B cell (primary cell): ENCODE measurements at regions of chr3 and their contacts with region 1.

Region 1: GRCh38 chr3:10115326-10116137 is at the start of gene BRK1:
- DNase-seq: peak; percentile 98
- ATAC-seq: peak; percentile 96
- H3K4me3 ChIP-seq: peak within 1 kb of the TSS; percentile 61 to 96 (median 84)
- H3K4me3 Mint-ChIP-seq: peak within 1 kb of the TSS; percentile 94
- H3K27ac ChIP-seq: peak within 1 kb of the TSS; percentile 48 to 85
- H3K27ac Mint-ChIP-seq: peak within 1 kb of the TSS; percentile 97
- H3K4me1 ChIP-seq: peaks cover 16 to 27% of the 10 kb centered on the region in 2 donors
- H3K4me1 Mint-ChIP-seq: peaks cover 34% of the 10 kb centered on the region
- H3K27me3 ChIP-seq: no peaks in the 10 kb centered on the region
- H3K27me3 Mint-ChIP-seq: no peaks in the 10 kb centered on the region
- CTCF ChIP-seq: no peak
- total RNA-seq, gene BRK1: 82.8 and 86.3 TPM in 2 replicates

Region 2: GRCh38 chr3:9843715-9844438 is 271.7 kb before region 1 on chr3 and contains the start of gene RPUSD3:
- CTCF ChIA-PET with region 1: no interaction called
- POLR2A ChIA-PET with region 1: no interaction called
- intact Hi-C with region 1: loop called (anchors 1 kb)
- DNase-seq: peak; percentile 97
- ATAC-seq: peak; percentile 100
- H3K4me3 ChIP-seq: peak within 1 kb of the TSS; percentile 60 to 96 (median 73)
- H3K4me3 Mint-ChIP-seq: peak within 1 kb of the TSS; percentile 98
- H3K27ac ChIP-seq: peak within 1 kb of the TSS; percentile 17 to 75
- H3K27ac Mint-ChIP-seq: peak within 1 kb of the TSS; percentile 92
- H3K4me1 ChIP-seq: peaks cover 8 to 17% of the 10 kb centered on the region in 2 donors
- H3K4me1 Mint-ChIP-seq: peaks cover 20% of the 10 kb centered on the region
- H3K27me3 ChIP-seq: no peaks in the 10 kb centered on the region
- H3K27me3 Mint-ChIP-seq: no peaks in the 10 kb centered on the region
- CTCF ChIP-seq: no peak
- total RNA-seq, gene RPUSD3: 60.7 and 62.1 TPM in 2 replicates

Region 3: DNA sequence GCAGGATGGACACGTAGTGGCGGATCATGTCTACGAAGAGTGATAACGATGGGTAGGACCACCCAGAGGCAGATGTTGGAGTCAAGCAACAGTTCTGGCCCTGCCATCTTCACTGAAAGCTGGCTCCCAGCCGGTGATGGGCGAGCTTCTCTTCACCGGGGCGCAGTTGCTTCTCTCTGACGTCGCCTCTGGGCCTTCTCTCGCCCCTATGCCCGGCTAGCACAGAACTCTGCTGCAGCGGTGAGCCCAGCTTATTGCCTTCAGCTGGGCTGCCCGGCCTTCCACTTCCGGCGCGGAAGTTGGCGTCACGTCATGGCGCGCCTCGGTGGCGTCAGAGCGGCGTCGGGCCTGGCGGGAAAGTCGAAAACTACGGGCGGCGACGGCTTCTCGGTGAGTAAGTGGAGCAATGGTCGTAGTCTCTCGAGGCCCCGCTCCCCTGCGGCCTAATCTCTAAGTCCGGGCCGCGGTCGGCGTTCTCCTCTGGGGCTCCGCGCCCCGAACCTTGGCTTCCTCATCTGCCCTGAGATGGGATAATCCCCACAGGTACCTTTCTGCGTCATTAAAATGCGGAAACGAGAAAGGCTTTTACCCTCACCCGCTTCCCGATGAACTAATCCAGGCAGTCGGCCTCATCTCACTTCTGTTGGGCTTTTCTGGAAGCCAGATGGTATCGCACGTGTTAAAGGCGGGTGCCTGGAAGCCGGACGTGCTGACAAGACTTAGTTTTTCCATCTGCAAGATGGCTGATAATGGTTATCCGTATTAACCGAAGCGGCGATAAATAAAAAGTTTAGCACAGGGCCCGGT is 89.2 kb before region 1 on chr3 and contains the start of gene FANCD2:
- CTCF ChIA-PET with region 1: no interaction called
- POLR2A ChIA-PET with region 1: no interaction called
- intact Hi-C with region 1: loop called (anchors 1 kb)
- DNase-seq: peak; percentile 96
- ATAC-seq: peak; percentile 83
- H3K4me3 ChIP-seq: peak within 1 kb of the TSS; percentile 83 to 94 (median 91)
- H3K4me3 Mint-ChIP-seq: peak within 1 kb of the TSS; percentile 99
- H3K27ac ChIP-seq: peak within 1 kb of the TSS; percentile 94 to 96
- H3K27ac Mint-ChIP-seq: peak within 1 kb of the TSS; percentile 96
- H3K4me1 ChIP-seq: peaks cover 18 to 23% of the 10 kb centered on the region in 2 donors
- H3K4me1 Mint-ChIP-seq: peaks cover 34% of the 10 kb centered on the region
- H3K27me3 ChIP-seq: no peaks in the 10 kb centered on the region
- H3K27me3 Mint-ChIP-seq: no peaks in the 10 kb centered on the region
- CTCF ChIP-seq: no peak
- total RNA-seq, gene FANCD2: 31.7 and 35.5 TPM in 2 replicates

Region 4: GRCh38 chr3:10164546-10165393 is 49.2 kb after region 1 on chr3 and contains the start of gene IRAK2:
- CTCF ChIA-PET with region 1: no interaction called
- POLR2A ChIA-PET with region 1: no interaction called
- intact Hi-C with region 1: loop called (anchors 1 kb)
- DNase-seq: peak; percentile 83
- ATAC-seq: peak; percentile 91
- H3K4me3 ChIP-seq: peak within 1 kb of the TSS; percentile 66 to 95 (median 84)
- H3K4me3 Mint-ChIP-seq: peak within 1 kb of the TSS; percentile 91
- H3K27ac ChIP-seq: peak within 1 kb of the TSS; percentile 43 to 79
- H3K27ac Mint-ChIP-seq: peak within 1 kb of the TSS; percentile 65
- H3K4me1 ChIP-seq: peaks cover 15 to 44% of the 10 kb centered on the region in 2 donors
- H3K4me1 Mint-ChIP-seq: peaks cover 37% of the 10 kb centered on the region
- H3K27me3 ChIP-seq: no peaks in the 10 kb centered on the region
- H3K27me3 Mint-ChIP-seq: no peaks in the 10 kb centered on the region
- CTCF ChIP-seq: peak; percentile 98
- total RNA-seq, gene IRAK2: 23.2 and 24.6 TPM in 2 replicates

Region 5: DNA sequence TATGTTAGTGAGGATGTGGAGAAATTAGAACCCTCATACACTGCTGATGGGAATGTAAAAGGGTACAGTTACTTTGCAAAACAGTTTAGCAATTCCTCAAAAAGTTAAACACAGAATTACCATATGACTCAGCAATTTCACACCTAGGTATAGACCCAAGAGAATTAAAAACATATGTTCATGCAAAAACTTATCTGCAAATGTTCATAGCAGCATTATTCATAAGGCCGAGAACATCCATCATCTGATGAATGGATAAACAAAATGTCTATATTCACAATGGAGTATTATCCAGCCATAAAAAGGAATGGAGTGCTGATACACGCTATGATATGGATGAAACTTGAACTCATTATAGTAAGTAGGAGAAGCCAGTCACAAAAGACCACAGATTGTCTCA is 195.0 kb after region 1 on chr3:
- CTCF ChIA-PET with region 1: no interaction called
- POLR2A ChIA-PET with region 1: no interaction called
- intact Hi-C with region 1: no loop called
- DNase-seq: no peak
- ATAC-seq: no peak
- H3K4me3 ChIP-seq: no peak overlapping the region
- H3K4me3 Mint-ChIP-seq: no peak overlapping the region
- H3K27ac ChIP-seq: no peak overlapping the region
- H3K27ac Mint-ChIP-seq: no peak overlapping the region
- H3K4me1 ChIP-seq: no peaks in the 10 kb centered on the region
- H3K4me1 Mint-ChIP-seq: peaks cover 2% of the 10 kb centered on the region
- H3K27me3 ChIP-seq: no peaks in the 10 kb centered on the region
- H3K27me3 Mint-ChIP-seq: no peaks in the 10 kb centered on the region
- CTCF ChIP-seq: no peak